ENCODE measurements at regions of chr2 and their contacts with region 1.

Region 1: GRCh38 chr2:200703127-200703925 is 108.4 kb upstream of the BZW1 start:
- DNase-seq: peak; percentile 71
- H3K4me3 Mint-ChIP-seq: peak overlapping the region; percentile 27
- H3K27ac Mint-ChIP-seq: peak overlapping the region; percentile 81
- H3K4me1 Mint-ChIP-seq: peaks cover 72% of the 10 kb centered on the region
- H3K27me3 Mint-ChIP-seq: peaks cover 6% of the 10 kb centered on the region

Region 2: DNA sequence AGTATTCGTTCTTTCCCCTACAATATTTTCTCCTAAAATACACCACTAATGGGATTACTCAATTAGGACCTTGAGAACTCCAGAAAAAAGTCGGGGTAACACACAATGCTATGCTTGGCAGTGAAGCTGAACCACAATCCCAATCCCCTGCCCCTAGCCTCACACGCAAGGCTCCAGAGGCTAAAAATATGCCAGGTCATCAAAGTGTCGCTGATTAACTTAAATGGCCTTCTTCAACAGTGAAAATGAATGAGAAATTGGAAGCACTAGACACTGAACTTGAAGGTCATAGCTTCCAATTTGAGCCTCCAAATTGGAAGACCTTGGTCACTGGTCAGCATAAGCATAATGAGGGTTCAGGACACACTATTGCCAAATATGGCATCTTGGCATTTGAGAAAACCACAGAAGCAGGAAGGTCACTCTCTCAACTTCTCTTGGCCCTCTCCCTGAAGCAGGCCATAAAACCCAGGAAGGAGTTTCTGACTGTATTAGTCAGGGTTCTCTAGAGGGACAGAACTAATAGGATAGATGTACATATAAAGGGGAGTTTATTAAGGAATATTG is 1159.6 kb before region 1 on chr2:
- CTCF ChIA-PET with region 1: no interaction called
- POLR2A ChIA-PET with region 1: no interaction called
- intact Hi-C with region 1: no loop called
- DNase-seq: no peak
- H3K4me3 Mint-ChIP-seq: no peak overlapping the region
- H3K27ac Mint-ChIP-seq: no peak overlapping the region
- H3K4me1 Mint-ChIP-seq: no peaks in the 10 kb centered on the region
- H3K27me3 Mint-ChIP-seq: peaks cover 10% of the 10 kb centered on the region

Region 3: DNA sequence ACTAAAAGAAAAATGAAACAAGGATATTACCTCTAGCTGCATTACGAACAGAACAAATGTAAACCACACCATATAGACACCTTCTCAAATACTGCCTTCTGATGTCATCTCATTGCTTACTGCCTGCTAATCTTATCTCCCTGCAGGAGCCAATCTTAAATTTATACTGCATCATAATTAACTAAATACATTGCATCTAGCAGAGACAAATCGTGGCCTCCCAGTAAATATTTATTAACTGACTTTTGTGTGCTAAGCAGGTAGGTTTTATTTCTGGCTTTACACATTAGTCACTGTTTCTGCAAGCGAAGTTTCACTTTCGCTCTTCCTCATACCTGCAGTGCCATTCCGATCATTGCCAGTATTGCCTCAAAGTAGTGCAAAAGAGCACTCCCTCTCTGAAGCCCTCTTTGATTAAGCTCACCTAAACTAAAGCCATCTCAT is 329.3 kb before region 1 on chr2:
- CTCF ChIA-PET with region 1: no interaction called
- POLR2A ChIA-PET with region 1: no interaction called
- intact Hi-C with region 1: loop called (anchors 2 kb)
- DNase-seq: peak; percentile 57
- H3K4me3 Mint-ChIP-seq: peak overlapping the region; percentile 64
- H3K27ac Mint-ChIP-seq: peak overlapping the region; percentile 63
- H3K4me1 Mint-ChIP-seq: peaks cover 40% of the 10 kb centered on the region
- H3K27me3 Mint-ChIP-seq: no peaks in the 10 kb centered on the region

Region 4: DNA sequence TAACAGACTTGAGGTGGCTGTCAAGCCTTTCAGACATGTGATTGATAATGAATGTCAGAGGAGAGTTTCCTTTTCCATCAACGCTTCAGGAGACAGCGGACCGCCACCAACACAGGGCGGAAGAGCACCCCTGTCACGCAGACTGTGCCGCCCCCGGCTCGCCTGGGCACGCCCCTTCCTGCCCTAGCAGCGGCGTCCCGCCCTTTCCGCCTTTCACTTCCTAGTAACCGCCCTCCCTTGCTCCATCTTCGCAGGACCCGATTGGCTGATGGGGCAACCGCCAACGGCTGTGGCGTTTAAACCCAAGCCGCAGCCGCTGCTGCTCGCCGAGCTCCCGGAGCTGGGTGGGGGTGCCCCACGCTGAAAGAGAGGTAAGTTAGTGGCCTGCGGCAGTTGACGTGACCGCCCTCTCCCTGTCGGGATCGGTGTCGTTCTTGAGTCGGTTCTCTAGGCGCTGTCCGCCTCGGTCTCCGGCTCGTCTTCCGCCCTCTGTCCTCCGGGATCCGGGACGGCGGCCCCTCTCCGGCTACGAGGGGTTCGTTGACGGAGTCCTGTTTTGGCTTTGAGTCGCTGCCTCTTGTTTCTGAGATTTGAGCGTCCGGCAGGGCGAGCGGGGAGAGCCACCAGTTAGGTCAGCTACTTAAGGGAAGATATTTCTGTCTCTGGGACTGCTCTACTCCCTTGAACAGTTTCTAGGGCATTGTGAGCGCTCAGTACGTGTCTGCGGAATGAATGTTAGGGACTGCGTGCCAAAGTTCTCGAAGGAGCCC is 177.3 kb before region 1 on chr2 and contains the start of gene SGO2:
- CTCF ChIA-PET with region 1: no interaction called
- POLR2A ChIA-PET with region 1: interaction called, 4 read pairs
- intact Hi-C with region 1: loop called (anchors 2 kb)
- DNase-seq: peak; percentile 98
- H3K4me3 Mint-ChIP-seq: peak within 1 kb of the TSS; percentile 88
- H3K27ac Mint-ChIP-seq: peak within 1 kb of the TSS; percentile 73
- H3K4me1 Mint-ChIP-seq: peaks cover 20% of the 10 kb centered on the region
- H3K27me3 Mint-ChIP-seq: no peaks in the 10 kb centered on the region
- total RNA-seq, gene SGO2: 40.5 to 40.7 TPM

Region 5: GRCh38 chr2:200735061-200735460 is 31.7 kb after region 1 on chr2:
- CTCF ChIA-PET with region 1: interaction called, 3 read pairs
- POLR2A ChIA-PET with region 1: no interaction called
- intact Hi-C with region 1: loop called (anchors 5 kb)
- DNase-seq: peak; percentile 53
- H3K4me3 Mint-ChIP-seq: no peak overlapping the region
- H3K27ac Mint-ChIP-seq: no peak overlapping the region
- H3K4me1 Mint-ChIP-seq: peaks cover 12% of the 10 kb centered on the region
- H3K27me3 Mint-ChIP-seq: peaks cover 4% of the 10 kb centered on the region

Region 6: DNA sequence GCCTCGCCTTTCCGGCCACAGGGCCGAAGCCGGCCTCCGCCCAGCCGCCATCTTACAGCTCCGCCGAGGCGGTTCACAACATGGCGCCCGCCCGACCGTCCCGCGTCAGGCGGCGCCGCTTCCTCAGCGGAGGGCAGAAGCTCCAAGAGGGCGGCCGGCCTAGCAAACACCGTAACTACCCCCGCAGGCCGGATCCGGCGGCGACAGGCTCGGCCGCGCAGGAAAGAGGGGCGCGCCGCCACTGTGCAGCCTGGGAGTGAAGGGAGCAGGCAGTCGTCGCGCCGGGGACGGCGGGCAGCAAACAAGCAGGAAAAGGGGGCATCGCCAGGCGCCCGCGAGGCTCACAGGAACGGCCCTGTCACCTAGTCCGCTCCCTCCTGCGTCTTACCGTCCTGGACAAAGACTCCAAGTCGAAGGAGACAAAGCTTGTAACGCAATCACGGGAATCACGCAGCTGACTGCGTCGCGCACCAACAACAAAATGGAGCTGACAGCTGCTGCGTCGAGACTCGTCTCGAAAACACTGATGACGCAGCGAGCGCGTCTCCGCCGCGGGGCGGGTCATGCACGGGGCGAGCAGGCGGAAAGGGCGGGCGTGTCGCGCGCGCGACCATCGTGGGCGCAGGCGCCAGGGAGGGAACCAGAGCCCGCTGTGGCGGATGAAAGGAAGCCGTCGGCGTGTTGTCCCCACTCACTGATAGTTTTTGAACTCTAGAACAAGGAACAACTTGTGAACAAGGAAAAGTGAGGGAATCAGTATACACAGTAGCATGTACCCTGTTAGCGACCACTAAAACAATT is 161.1 kb after region 1 on chr2 and contains the start of gene CLK1:
- CTCF ChIA-PET with region 1: no interaction called
- POLR2A ChIA-PET with region 1: interaction called, 11 read pairs
- intact Hi-C with region 1: loop called (anchors 1 kb)
- DNase-seq: peak; percentile 98
- H3K4me3 Mint-ChIP-seq: peak within 1 kb of the TSS; percentile 87
- H3K27ac Mint-ChIP-seq: peak within 1 kb of the TSS; percentile 100
- H3K4me1 Mint-ChIP-seq: peaks cover 36% of the 10 kb centered on the region
- H3K27me3 Mint-ChIP-seq: no peaks in the 10 kb centered on the region
- total RNA-seq, gene CLK1: 112 to 114 TPM

Region 7: DNA sequence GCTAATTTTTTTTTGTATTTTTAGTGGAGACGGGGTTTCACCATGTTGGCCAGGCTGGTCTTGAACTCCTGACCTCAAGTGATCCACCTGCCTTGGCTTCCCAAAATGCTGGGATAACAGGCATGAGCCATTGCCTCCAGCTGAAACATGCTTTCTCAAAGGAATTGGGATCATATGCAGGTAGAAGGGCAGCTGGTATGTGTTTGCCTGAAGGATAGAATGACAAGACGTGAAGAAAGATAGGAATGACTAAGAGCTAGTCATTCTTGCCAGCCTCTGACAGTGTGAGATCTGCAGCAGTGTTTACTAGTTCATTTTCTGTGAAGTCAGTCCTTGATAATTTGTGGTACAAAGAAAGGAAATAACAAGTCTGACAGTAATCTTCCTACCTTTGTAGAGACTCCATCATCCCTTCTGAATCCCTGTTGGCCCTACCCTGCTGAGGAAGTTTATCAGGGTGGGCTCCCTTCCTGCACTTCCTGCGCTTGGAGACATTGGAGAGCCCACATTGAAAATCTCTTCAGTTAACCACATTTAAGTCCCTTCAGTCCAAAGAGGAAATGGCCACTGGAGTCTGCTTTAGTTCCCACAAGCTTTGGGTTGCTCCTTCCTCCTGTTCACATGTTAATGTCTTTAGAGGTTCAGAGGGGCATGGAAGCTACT is 427.3 kb after region 1 on chr2:
- CTCF ChIA-PET with region 1: no interaction called
- POLR2A ChIA-PET with region 1: no interaction called
- intact Hi-C with region 1: loop called (anchors 2 kb)
- DNase-seq: peak; percentile 55
- H3K4me3 Mint-ChIP-seq: peak overlapping the region; percentile 92
- H3K27ac Mint-ChIP-seq: peak overlapping the region; percentile 94
- H3K4me1 Mint-ChIP-seq: peaks cover 54% of the 10 kb centered on the region
- H3K27me3 Mint-ChIP-seq: no peaks in the 10 kb centered on the region

Region 8: DNA sequence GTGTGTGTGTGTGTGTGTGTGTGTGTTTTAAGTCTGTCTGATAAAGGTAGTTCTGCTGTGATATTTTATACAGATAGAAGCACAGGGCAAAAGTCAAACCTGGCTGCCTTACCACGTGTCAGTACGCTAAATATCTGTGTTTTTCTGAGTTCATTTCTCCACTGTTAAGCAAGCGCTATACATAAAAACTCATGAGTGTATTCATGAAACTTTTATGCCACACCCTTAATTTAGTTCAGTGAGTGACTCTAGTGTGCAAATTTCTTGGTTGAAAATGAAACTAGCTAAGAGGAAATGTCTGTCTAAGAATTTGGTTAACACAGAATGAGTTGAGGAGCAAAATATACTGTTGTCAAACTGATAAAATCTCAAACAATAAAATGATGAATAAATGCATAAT is 490.8 kb after region 1 on chr2:
- CTCF ChIA-PET with region 1: no interaction called
- POLR2A ChIA-PET with region 1: no interaction called
- intact Hi-C with region 1: no loop called
- DNase-seq: no peak
- H3K4me3 Mint-ChIP-seq: no peak overlapping the region
- H3K27ac Mint-ChIP-seq: peak overlapping the region; percentile 33
- H3K4me1 Mint-ChIP-seq: peaks cover 53% of the 10 kb centered on the region
- H3K27me3 Mint-ChIP-seq: no peaks in the 10 kb centered on the region

Measured in activated CD4-positive, alpha-beta memory T cell treated with anti-CD3 and anti-CD28 coated beads for 36 hours (primary cell).